Activated CD8-positive, alpha-beta T cell treated with anti-CD3 and anti-CD28 coated beads for 36 hours (primary cell): ENCODE measurements at regions of chrX and their contacts with region 1.

Region 1: GRCh38 chrX:120213436-120214265 is 37.0 kb upstream of the ZBTB33 start:
- DNase-seq: peak; percentile 73
- ATAC-seq: peak; percentile 83
- H3K4me3 Mint-ChIP-seq: no peak overlapping the region
- H3K27ac Mint-ChIP-seq: no peak overlapping the region
- H3K4me1 Mint-ChIP-seq: peaks cover 10% of the 10 kb centered on the region
- H3K27me3 Mint-ChIP-seq: no peaks in the 10 kb centered on the region
- CTCF ChIP-seq: peak; percentile 57

Region 2: GRCh38 chrX:120228187-120228908 is 14.7 kb after region 1 on chrX:
- CTCF ChIA-PET with region 1: interaction called, 35 read pairs
- POLR2A ChIA-PET with region 1: no interaction called
- intact Hi-C with region 1: no loop called
- DNase-seq: no peak
- ATAC-seq: no peak
- H3K4me3 Mint-ChIP-seq: no peak overlapping the region
- H3K27ac Mint-ChIP-seq: no peak overlapping the region
- H3K4me1 Mint-ChIP-seq: peaks cover 11% of the 10 kb centered on the region
- H3K27me3 Mint-ChIP-seq: no peaks in the 10 kb centered on the region
- CTCF ChIP-seq: no peak

Region 3: GRCh38 chrX:120262859-120263708 is 49.4 kb after region 1 on chrX:
- CTCF ChIA-PET with region 1: no interaction called
- POLR2A ChIA-PET with region 1: no interaction called
- intact Hi-C with region 1: no loop called
- DNase-seq: no peak
- ATAC-seq: no peak
- H3K4me3 Mint-ChIP-seq: no peak overlapping the region
- H3K27ac Mint-ChIP-seq: no peak overlapping the region
- H3K4me1 Mint-ChIP-seq: peaks cover under 1% of the 10 kb centered on the region
- H3K27me3 Mint-ChIP-seq: no peaks in the 10 kb centered on the region
- CTCF ChIP-seq: no peak